WTC11 (cell line): ENCODE measurements at regions of chr20 and their contacts with region 1.

Region 1: GRCh38 chr20:43983359-43983758 is 68.7 kb downstream of the TOX2 start:
- DNase-seq: peak; percentile 64
- ATAC-seq: peak; percentile 30; the same call in 1 of the 2 replicates
- H3K4me3 Mint-ChIP-seq: no peak overlapping the region
- H3K27ac Mint-ChIP-seq: no peak overlapping the region
- H3K4me1 Mint-ChIP-seq: no peaks in the 10 kb centered on the region
- H3K27me3 Mint-ChIP-seq: peaks cover 2% of the 10 kb centered on the region; the same call in 1 of the 2 replicates
- CTCF ChIP-seq: peak; percentile 54

Region 2: DNA sequence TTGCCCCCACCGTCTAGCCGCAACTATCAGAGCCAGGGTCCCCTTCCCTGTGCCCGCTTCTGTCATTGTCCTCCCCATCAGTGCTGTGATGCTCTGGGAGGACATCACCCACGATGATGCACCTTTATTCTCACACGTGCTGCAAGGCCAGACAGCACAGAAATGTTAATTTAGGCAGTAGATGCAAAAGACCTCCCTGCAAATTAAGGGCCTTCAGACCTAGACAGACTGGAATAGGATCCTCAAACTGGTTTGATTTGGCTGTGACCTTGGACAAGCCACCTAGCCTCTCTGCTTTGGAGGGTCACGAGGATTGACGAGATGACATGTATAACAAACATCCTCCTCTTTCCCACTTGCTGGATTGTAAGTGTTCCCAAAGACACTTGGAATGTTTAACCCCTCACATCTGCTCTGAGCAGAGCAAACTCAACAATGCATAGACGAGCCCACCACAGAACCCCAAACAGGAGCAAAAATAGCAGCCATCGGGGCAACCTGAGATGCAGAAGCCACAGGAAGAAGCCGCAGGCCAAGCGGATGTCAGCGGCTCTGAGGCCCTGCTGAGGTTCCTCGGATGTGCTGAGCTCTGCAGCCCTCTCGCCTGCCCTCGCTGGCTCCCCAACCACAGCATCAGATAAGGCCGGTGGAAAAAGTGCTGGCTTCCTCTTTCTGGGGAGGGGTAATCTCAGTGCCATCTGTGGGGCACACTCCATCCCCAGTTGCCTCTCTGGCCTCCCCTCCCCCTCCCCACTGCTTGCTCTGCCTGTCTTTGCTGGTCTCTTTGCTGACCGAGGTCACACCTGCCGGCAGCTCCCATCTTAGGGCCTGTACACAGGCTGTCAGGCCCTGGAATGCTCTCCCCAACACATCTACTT is 33.4 kb before region 1 on chr20:
- CTCF ChIA-PET with region 1: interaction called, 12 read pairs
- POLR2A ChIA-PET with region 1: no interaction called
- DNase-seq: no peak
- ATAC-seq: no peak
- H3K4me3 Mint-ChIP-seq: no peak overlapping the region
- H3K27ac Mint-ChIP-seq: no peak overlapping the region
- H3K4me1 Mint-ChIP-seq: peaks cover 32% of the 10 kb centered on the region
- H3K27me3 Mint-ChIP-seq: no peaks in the 10 kb centered on the region
- CTCF ChIP-seq: no peak

Region 3: DNA sequence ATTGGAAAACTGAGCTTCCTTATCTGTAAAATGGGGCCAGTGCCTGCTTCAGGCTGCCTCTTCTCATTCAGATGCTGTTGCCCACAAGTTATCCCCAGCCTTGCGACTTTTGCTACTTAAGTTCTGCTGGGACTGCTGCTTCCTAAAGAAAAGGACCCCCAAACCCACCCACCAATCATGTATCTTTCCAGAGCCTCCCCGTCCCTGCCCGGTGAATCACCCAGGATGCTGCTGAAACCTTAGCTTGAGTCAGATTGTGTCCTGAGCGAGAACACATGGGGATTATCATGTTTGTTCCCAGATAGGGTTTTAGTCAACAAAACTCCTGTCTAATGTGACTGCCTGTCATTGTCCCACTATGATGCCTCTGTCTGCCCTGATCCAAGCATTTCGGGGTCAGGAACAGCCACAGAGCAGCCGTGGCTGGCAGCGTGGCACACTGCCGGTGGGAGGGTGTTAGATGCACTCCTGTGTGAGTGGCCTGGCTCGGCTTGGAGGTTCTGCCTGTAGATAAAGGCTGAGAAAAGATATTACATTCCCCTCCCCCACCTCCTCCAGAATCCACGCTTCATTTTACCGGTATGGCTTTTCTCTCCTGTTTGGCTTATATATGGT is 11.2 kb after region 1 on chr20:
- CTCF ChIA-PET with region 1: interaction called, 12 read pairs
- POLR2A ChIA-PET with region 1: no interaction called
- DNase-seq: no peak
- ATAC-seq: no peak
- H3K4me3 Mint-ChIP-seq: no peak overlapping the region
- H3K27ac Mint-ChIP-seq: no peak overlapping the region; the same call in 1 of the 2 replicates
- H3K4me1 Mint-ChIP-seq: no peaks in the 10 kb centered on the region
- H3K27me3 Mint-ChIP-seq: no peaks in the 10 kb centered on the region
- CTCF ChIP-seq: no peak

Region 4: GRCh38 chr20:44092551-44093248 is 109.3 kb after region 1 on chr20:
- CTCF ChIA-PET with region 1: no interaction called
- POLR2A ChIA-PET with region 1: no interaction called
- DNase-seq: no peak
- ATAC-seq: peak; percentile 50
- H3K4me3 Mint-ChIP-seq: no peak overlapping the region
- H3K27ac Mint-ChIP-seq: peak overlapping the region; percentile 77; the same call in 1 of the 2 replicates
- H3K4me1 Mint-ChIP-seq: no peaks in the 10 kb centered on the region
- H3K27me3 Mint-ChIP-seq: no peaks in the 10 kb centered on the region
- CTCF ChIP-seq: 0 out of 2 replicates have a peak, but pooled peaks have one; percentile 37